GM12878 (cell line): ENCODE measurements at regions of chr16 and their contacts with region 1.

Region 1: DNA sequence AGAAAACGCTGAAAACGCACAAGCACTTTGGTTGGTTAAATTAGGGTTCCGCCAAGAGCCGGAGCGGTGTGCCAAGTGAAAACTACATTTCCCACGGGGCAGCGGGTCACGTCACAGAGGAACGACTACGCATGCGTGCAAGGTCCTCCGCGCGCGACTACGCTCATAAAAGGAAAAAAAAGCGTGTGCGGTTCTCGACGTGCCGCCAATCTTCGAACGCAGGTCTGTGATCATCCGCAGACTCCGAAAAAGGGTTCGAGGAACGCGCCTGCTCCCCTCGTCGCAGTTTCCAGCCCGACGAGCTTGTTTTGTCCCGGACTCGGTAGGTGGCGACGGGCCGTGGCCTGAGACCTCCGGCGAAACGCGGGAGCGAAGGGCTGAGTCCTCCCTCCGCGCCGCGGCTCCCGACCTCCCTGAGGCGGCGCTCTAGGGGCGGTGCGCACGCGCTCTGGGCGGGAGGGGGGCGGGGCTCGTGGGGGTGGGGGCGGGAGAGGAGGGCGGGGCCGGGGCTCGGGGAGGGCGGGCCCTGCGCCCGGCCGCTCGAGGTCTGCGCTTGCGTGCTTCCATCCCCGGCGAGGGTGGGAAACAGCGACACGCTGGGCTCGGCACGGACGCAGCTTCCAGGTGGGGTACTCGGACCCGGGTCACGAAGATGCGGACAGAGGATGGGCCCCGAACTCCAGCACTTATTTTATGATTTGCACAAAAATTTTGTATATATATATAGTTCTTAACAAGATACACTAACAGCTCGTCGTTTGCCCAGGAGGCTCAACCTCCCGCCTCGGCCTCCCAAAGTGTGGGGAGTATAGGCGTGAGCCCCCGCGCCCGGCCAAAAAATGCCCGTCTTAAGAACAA is at the start of gene SGF29:
- DNase-seq: peak; percentile 82
- ATAC-seq: peak; percentile 90
- H3K4me3 ChIP-seq: peak within 1 kb of the TSS; percentile 88
- H3K27ac ChIP-seq: peak within 1 kb of the TSS; percentile 74
- H3K4me1 ChIP-seq: peaks cover 17% of the 10 kb centered on the region
- H3K27me3 ChIP-seq: no peaks in the 10 kb centered on the region
- CTCF ChIP-seq: peak; percentile 18 to 42 (median 26); a peak in 3 of 6 replicates
- EP300 ChIP-seq: no peak
- POLR2A ChIP-seq: peak; percentile 98
- RAD21 ChIP-seq: no peak
- polyA plus RNA-seq, gene SGF29: 4.3 to 7.1 TPM

Region 2: GRCh38 chr16:28491970-28492474 is 62.0 kb before region 1 on chr16 and contains the start of gene CLN3:
- CTCF ChIA-PET with region 1: interaction called, 3 read pairs
- POLR2A ChIA-PET with region 1: interaction called, 4 read pairs
- RAD21 ChIA-PET with region 1: interaction called, 4 read pairs
- SMC1A ChIA-PET with region 1: interaction called, 3 read pairs
- in situ Hi-C with region 1: no loop called
- intact Hi-C with region 1: loop called (anchors 5 kb)
- DNase-seq: peak; percentile 89
- ATAC-seq: peak; percentile 87
- H3K4me3 ChIP-seq: peak within 1 kb of the TSS; percentile 91
- H3K27ac ChIP-seq: peak within 1 kb of the TSS; percentile 97
- H3K4me1 ChIP-seq: peaks cover 38% of the 10 kb centered on the region
- H3K27me3 ChIP-seq: no peaks in the 10 kb centered on the region
- CTCF ChIP-seq: no peak
- EP300 ChIP-seq: peak in 1 of 2 experiments; percentile 52; a peak in 2 of 4 replicates
- POLR2A ChIP-seq: peak; percentile 69
- RAD21 ChIP-seq: no peak
- polyA plus RNA-seq, gene CLN3: 2.3 to 2.7 TPM

Region 3: DNA sequence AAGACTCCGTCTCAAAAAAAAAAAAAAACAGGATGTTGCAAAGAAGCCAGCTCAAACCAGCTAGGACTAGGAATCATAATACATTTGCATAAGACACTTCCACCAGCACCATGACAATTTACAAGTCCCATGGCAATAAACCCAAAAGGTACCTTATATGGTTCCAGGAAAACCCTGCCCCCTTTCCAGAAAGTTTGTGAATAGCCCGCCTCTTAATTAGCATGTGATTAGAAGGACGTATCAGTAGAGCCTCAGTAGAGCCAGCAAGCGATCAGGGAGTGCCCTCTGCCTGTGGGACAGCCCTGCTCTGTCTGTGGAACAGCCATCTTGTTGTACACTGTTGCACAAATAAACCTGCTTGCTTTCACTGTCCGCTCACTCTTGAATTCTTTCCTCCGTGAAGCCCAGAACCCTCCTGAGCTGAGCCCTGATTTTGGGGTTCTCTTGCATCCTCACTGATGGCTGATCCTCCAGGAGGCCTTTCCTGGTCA is 29.3 kb before region 1 on chr16:
- CTCF ChIA-PET with region 1: no interaction called
- POLR2A ChIA-PET with region 1: interaction called, 4 read pairs
- RAD21 ChIA-PET with region 1: no interaction called
- SMC1A ChIA-PET with region 1: no interaction called
- in situ Hi-C with region 1: loop called (anchors 5 kb)
- intact Hi-C with region 1: no loop called
- DNase-seq: no peak
- ATAC-seq: peak; percentile 61
- H3K4me3 ChIP-seq: no peak overlapping the region
- H3K27ac ChIP-seq: no peak overlapping the region
- H3K4me1 ChIP-seq: peaks cover 10% of the 10 kb centered on the region; the same call in 1 of the 2 replicates
- H3K27me3 ChIP-seq: no peaks in the 10 kb centered on the region; a peak in 1 of 4 replicates
- CTCF ChIP-seq: peak; percentile 10 to 19 (median 17); a peak in 4 of 6 replicates
- EP300 ChIP-seq: no peak
- POLR2A ChIP-seq: no peak
- RAD21 ChIP-seq: peak; percentile 41; the same call in 1 of the 2 replicates

Region 4: GRCh38 chr16:28580726-28581315 is 26.8 kb after region 1 on chr16:
- CTCF ChIA-PET with region 1: no interaction called
- POLR2A ChIA-PET with region 1: no interaction called
- RAD21 ChIA-PET with region 1: no interaction called
- SMC1A ChIA-PET with region 1: no interaction called
- in situ Hi-C with region 1: no loop called
- intact Hi-C with region 1: no loop called
- DNase-seq: no peak
- ATAC-seq: no peak
- H3K4me3 ChIP-seq: no peak overlapping the region
- H3K27ac ChIP-seq: no peak overlapping the region
- H3K4me1 ChIP-seq: no peaks in the 10 kb centered on the region; the same call in 1 of the 2 replicates
- H3K27me3 ChIP-seq: no peaks in the 10 kb centered on the region
- CTCF ChIP-seq: no peak
- EP300 ChIP-seq: no peak
- POLR2A ChIP-seq: no peak
- RAD21 ChIP-seq: no peak